Tibial artery (tissue), 4 donors: ENCODE measurements at regions of chr7 and their contacts with region 1.

Region 1: GRCh38 chr7:99040104-99040958 is 103.6 kb downstream of the SMURF1 start:
- DNase-seq: peak; percentile 78 to 94
- H3K4me3 ChIP-seq: no peak overlapping the region
- H3K27ac ChIP-seq: peak overlapping the region; percentile 82 to 92
- H3K4me1 ChIP-seq: peaks cover 0 to 63% (median 35%) of the 10 kb centered on the region in 4 donors
- H3K27me3 ChIP-seq: no peaks in the 10 kb centered on the region
- CTCF ChIP-seq: peak; percentile 69 to 92

Region 2: GRCh38 chr7:98892609-98893008 is 147.7 kb before region 1 on chr7:
- intact Hi-C with region 1: no loop called
- DNase-seq: no peak
- H3K4me3 ChIP-seq: no peak overlapping the region
- H3K27ac ChIP-seq: no peak overlapping the region
- H3K4me1 ChIP-seq: no peaks in the 10 kb centered on the region
- H3K27me3 ChIP-seq: no peaks in the 10 kb centered on the region
- CTCF ChIP-seq: no peak

Region 3: DNA sequence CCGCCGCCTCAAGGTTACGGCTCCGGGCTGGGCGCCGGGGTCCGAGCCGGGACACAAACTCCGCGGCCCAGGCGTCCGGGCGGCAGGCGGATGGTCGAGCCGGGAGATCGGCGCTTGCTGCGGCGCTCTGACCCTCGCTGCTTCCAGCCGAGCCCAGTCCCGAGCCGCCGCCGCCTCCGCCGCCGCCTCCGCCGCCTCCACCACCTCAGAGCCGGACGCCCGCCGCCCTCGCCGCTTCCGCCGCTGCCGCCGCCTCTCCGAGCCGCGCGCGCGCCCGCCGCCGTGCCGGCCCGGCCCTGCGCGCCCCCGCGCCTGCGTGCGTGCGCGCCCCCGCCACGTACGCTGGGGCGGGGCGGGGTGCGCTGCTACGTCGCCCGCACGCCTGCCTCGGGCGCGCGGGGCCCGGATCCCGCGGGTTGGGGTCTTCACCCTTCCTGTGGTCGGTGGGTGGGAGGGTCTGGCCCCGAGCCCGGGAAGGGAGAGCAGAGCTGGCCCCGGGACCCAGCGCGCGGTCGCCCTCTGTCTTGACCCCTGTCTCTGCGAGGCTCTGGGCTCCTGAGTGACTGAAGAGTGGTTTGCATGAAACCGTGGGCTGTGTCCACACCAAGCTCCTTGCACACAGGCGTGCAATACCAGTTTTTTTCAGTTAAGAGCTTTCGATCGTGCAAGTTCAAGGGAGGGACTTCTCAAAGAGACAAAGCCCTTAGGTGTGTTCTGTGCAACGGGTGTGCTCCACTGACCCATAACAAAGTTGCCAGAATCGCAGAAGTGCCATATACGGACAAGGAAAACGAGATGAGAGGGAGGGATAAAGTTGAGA is 103.7 kb after region 1 on chr7 and contains the start of gene SMURF1:
- intact Hi-C with region 1: loop called (anchors 5 kb)
- DNase-seq: peak; percentile 59 to 83
- H3K4me3 ChIP-seq: peak within 1 kb of the TSS; percentile 92 to 100
- H3K27ac ChIP-seq: peak within 1 kb of the TSS; percentile 95 to 100
- H3K4me1 ChIP-seq: peaks cover 0 to 38% (median 21%) of the 10 kb centered on the region in 4 donors
- H3K27me3 ChIP-seq: no peaks in the 10 kb centered on the region
- CTCF ChIP-seq: no peak

Region 4: GRCh38 chr7:99219985-99220384 is 179.7 kb after region 1 on chr7:
- intact Hi-C with region 1: loop called (anchors 5 kb)
- DNase-seq: no peak
- H3K4me3 ChIP-seq: no peak overlapping the region
- H3K27ac ChIP-seq: no peak overlapping the region
- H3K4me1 ChIP-seq: peaks cover 0 to 10% (median 2%) of the 10 kb centered on the region in 4 donors
- H3K27me3 ChIP-seq: no peaks in the 10 kb centered on the region
- CTCF ChIP-seq: no peak

Region 5: DNA sequence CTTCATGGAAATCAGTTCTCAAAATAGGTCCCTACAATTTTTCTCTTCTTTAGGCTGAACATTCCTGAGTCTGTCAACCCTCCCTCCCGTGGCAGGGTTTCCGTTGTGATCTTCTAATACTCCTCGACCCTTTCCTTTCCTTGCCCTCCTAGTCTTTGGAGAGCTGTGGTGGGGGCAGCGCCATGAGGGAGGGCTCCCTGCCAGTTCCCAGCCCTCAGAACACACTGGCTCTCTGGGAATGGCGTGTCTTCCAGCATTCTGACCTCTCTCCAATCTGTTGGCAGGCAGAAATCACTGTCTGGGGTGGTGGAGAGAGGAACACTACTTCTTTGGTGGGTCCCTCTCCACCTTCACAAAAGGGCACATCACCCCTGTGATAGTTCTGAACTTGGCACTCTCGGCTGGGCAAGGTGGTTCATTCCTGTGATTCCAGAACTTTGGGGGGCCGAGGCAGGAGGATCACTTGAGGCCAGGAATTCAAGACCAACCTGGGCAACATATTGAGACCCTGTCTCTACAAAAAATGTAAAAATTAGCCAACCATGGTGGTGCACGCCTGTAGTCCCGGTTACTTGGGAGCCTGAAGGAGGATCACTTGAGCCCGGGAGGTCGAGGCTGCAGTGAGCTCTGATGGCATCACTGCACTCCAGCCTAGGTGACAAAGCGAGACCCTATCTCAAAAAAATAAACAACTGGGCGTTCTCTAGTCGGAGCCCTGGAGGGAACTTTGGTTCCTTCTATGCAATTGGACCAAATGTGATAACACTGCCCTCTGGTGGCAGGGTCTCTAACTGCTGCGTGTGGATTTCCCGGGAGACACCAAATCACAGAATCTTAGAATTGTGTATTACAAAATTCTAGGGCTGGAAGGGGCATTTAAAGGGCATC is 272.2 kb after region 1 on chr7:
- intact Hi-C with region 1: loop called (anchors 1 kb)
- DNase-seq: peak; percentile 79 to 80
- H3K4me3 ChIP-seq: no peak overlapping the region
- H3K27ac ChIP-seq: peak overlapping the region; percentile 58 to 69
- H3K4me1 ChIP-seq: peaks cover 0 to 22% (median 12%) of the 10 kb centered on the region in 4 donors
- H3K27me3 ChIP-seq: no peaks in the 10 kb centered on the region
- CTCF ChIP-seq: peak; percentile 83 to 88

Region 6: GRCh38 chr7:99409806-99410205 is 369.5 kb after region 1 on chr7:
- intact Hi-C with region 1: loop called (anchors 10 kb)
- DNase-seq: no peak
- H3K4me3 ChIP-seq: peak overlapping the region; percentile 94 to 98
- H3K27ac ChIP-seq: peak overlapping the region; percentile 93 to 97
- H3K4me1 ChIP-seq: peaks cover 0 to 45% (median 38%) of the 10 kb centered on the region in 4 donors
- H3K27me3 ChIP-seq: no peaks in the 10 kb centered on the region
- CTCF ChIP-seq: no peak